ENCODE measurements at regions of chr4 and their contacts with region 1.

Region 1: GRCh38 chr4:128863312-128864075 is 54.0 kb downstream of the JADE1 start:
- DNase-seq: peak; percentile 41
- H3K4me3 Mint-ChIP-seq: no peak overlapping the region
- H3K27ac Mint-ChIP-seq: peak overlapping the region; percentile 67
- H3K4me1 Mint-ChIP-seq: peaks cover 46% of the 10 kb centered on the region
- H3K27me3 Mint-ChIP-seq: no peaks in the 10 kb centered on the region

Region 2: GRCh38 chr4:128454281-128455075 is 409.0 kb before region 1 on chr4:
- intact Hi-C with region 1: loop called (anchors 5 kb)
- DNase-seq: peak; percentile 41
- H3K4me3 Mint-ChIP-seq: no peak overlapping the region
- H3K27ac Mint-ChIP-seq: no peak overlapping the region
- H3K4me1 Mint-ChIP-seq: peaks cover 10% of the 10 kb centered on the region
- H3K27me3 Mint-ChIP-seq: peaks cover 2% of the 10 kb centered on the region

Region 3: GRCh38 chr4:128574706-128575105 is 288.8 kb before region 1 on chr4:
- intact Hi-C with region 1: loop called (anchors 1 kb)
- DNase-seq: peak; percentile 51
- H3K4me3 Mint-ChIP-seq: no peak overlapping the region
- H3K27ac Mint-ChIP-seq: no peak overlapping the region
- H3K4me1 Mint-ChIP-seq: no peaks in the 10 kb centered on the region
- H3K27me3 Mint-ChIP-seq: peaks cover 2% of the 10 kb centered on the region

Region 4: GRCh38 chr4:128840711-128841318 is 22.7 kb before region 1 on chr4:
- intact Hi-C with region 1: loop called (anchors 2 kb)
- DNase-seq: no peak
- H3K4me3 Mint-ChIP-seq: no peak overlapping the region
- H3K27ac Mint-ChIP-seq: peak overlapping the region; percentile 65
- H3K4me1 Mint-ChIP-seq: peaks cover 28% of the 10 kb centered on the region
- H3K27me3 Mint-ChIP-seq: no peaks in the 10 kb centered on the region

Region 5: GRCh38 chr4:128940971-128941370 is 77.5 kb after region 1 on chr4:
- intact Hi-C with region 1: no loop called
- DNase-seq: no peak
- H3K4me3 Mint-ChIP-seq: no peak overlapping the region
- H3K27ac Mint-ChIP-seq: no peak overlapping the region
- H3K4me1 Mint-ChIP-seq: no peaks in the 10 kb centered on the region
- H3K27me3 Mint-ChIP-seq: no peaks in the 10 kb centered on the region

Region 6: DNA sequence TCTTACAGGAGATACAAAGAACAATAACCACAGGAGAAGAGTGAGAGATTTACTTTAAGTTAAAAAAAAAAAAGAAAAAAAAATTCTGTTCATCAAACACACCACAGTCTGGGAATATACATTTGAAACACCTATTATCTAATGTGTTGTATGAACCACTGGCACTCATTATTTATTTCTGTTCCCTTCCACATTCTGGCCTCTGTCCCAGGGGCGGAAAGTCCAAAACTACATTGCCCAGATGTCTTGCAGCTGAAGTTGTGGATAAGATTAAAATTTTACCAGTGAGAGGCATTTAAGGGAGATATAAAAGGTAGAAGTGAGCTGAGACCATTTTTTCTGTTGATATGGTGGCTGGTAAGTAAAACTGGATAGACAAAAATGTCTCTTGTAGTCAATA is 173.6 kb after region 1 on chr4:
- intact Hi-C with region 1: no loop called
- DNase-seq: no peak
- H3K4me3 Mint-ChIP-seq: no peak overlapping the region
- H3K27ac Mint-ChIP-seq: no peak overlapping the region
- H3K4me1 Mint-ChIP-seq: peaks cover 3% of the 10 kb centered on the region
- H3K27me3 Mint-ChIP-seq: no peaks in the 10 kb centered on the region

Measured in activated T-helper 2 cell treated with anti-CD3 and anti-CD28 coated beads, Interferon-gamma antibody, Interleukin-2, Interleukin-4, amounts not matched to agents 10 μg/mL and 5 μg/mL and 100 μg/mL, durations not matched to agents 14 hours and 24 hours and 36 hours (primary cell).